Activated naive CD4-positive, alpha-beta T cell treated with anti-CD3 and anti-CD28 coated beads, Interleukin-2, amount 10 ng/mL, durations not matched to agents 7 days and 5 days (primary cell): ENCODE measurements at regions of chr16 and their contacts with region 1.

Region 1: GRCh38 chr16:67641779-67642708 is 2.9 kb upstream of the CARMIL2 start:
- DNase-seq: no peak
- H3K4me3 Mint-ChIP-seq: no peak overlapping the region
- H3K27ac Mint-ChIP-seq: no peak overlapping the region
- H3K4me1 Mint-ChIP-seq: peaks cover 25% of the 10 kb centered on the region
- H3K27me3 Mint-ChIP-seq: no peaks in the 10 kb centered on the region

Region 2: DNA sequence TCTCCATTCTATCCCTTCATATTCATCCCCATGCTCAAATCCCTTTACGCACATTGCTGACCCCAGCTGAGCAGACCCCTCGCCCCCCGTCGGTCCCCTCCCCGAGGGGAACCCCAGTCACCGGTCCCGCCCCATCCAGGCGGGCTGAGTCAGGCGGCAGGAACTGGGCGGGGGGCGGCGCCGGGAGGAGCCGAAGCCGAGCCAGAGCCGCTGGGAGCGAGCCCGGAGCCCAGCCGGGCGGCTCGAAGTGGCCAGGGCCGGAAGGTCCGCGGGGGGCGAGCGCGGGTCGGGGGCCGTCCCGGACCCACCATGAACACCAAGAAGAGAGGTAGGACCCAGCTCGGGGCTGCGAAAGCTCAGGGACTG is 104.8 kb before region 1 on chr16:
- CTCF ChIA-PET with region 1: interaction called, 12 read pairs
- DNase-seq: peak; percentile 73
- H3K4me3 Mint-ChIP-seq: peak overlapping the region; percentile 76
- H3K27ac Mint-ChIP-seq: no peak overlapping the region
- H3K4me1 Mint-ChIP-seq: peaks cover 30% of the 10 kb centered on the region
- H3K27me3 Mint-ChIP-seq: peaks cover 65% of the 10 kb centered on the region

Region 3: GRCh38 chr16:67561824-67562525 is 80.1 kb before region 1 on chr16:
- CTCF ChIA-PET with region 1: interaction called, 46 read pairs
- DNase-seq: peak; percentile 99
- H3K4me3 Mint-ChIP-seq: peak overlapping the region; percentile 89
- H3K27ac Mint-ChIP-seq: peak overlapping the region; percentile 97
- H3K4me1 Mint-ChIP-seq: peaks cover 57% of the 10 kb centered on the region
- H3K27me3 Mint-ChIP-seq: no peaks in the 10 kb centered on the region

Region 4: GRCh38 chr16:67660564-67661028 is 18.6 kb after region 1 on chr16 and contains the start of gene PARD6A:
- CTCF ChIA-PET with region 1: interaction called, 33 read pairs
- DNase-seq: peak; percentile 98
- H3K4me3 Mint-ChIP-seq: peak within 1 kb of the TSS; percentile 95
- H3K27ac Mint-ChIP-seq: peak within 1 kb of the TSS; percentile 97
- H3K4me1 Mint-ChIP-seq: peaks cover 34% of the 10 kb centered on the region
- H3K27me3 Mint-ChIP-seq: no peaks in the 10 kb centered on the region

Region 5: GRCh38 chr16:67667817-67668494 is 25.9 kb after region 1 on chr16:
- CTCF ChIA-PET with region 1: interaction called, 25 read pairs
- DNase-seq: peak; percentile 93
- H3K4me3 Mint-ChIP-seq: peak overlapping the region; percentile 87
- H3K27ac Mint-ChIP-seq: peak overlapping the region; percentile 86
- H3K4me1 Mint-ChIP-seq: peaks cover 32% of the 10 kb centered on the region
- H3K27me3 Mint-ChIP-seq: peaks cover 4% of the 10 kb centered on the region